ENCODE measurements at regions of chr10 and their contacts with region 1.

Region 1: GRCh38 chr10:96565774-96566173 is 21.0 kb downstream of the TM9SF3 start:
- DNase-seq: no peak
- ATAC-seq: no peak
- H3K4me3 Mint-ChIP-seq: no peak overlapping the region
- H3K27ac Mint-ChIP-seq: no peak overlapping the region
- H3K4me1 Mint-ChIP-seq: peaks cover 2% of the 10 kb centered on the region
- H3K27me3 Mint-ChIP-seq: no peaks in the 10 kb centered on the region
- CTCF ChIP-seq: no peak

Region 2: GRCh38 chr10:96524741-96525140 is 41.0 kb before region 1 on chr10:
- CTCF ChIA-PET with region 1: no interaction called
- POLR2A ChIA-PET with region 1: no interaction called
- intact Hi-C with region 1: loop called (anchors 5 kb)
- DNase-seq: no peak
- ATAC-seq: no peak
- H3K4me3 Mint-ChIP-seq: no peak overlapping the region
- H3K27ac Mint-ChIP-seq: no peak overlapping the region
- H3K4me1 Mint-ChIP-seq: no peaks in the 10 kb centered on the region
- H3K27me3 Mint-ChIP-seq: no peaks in the 10 kb centered on the region
- CTCF ChIP-seq: no peak

Measured in activated B cell treated with CpG ODN at 0.5 μM for 24 hours (primary cell).